CD4-positive, alpha-beta T cell (primary cell): ENCODE measurements at regions of chr2 and their contacts with region 1.

Region 1: DNA sequence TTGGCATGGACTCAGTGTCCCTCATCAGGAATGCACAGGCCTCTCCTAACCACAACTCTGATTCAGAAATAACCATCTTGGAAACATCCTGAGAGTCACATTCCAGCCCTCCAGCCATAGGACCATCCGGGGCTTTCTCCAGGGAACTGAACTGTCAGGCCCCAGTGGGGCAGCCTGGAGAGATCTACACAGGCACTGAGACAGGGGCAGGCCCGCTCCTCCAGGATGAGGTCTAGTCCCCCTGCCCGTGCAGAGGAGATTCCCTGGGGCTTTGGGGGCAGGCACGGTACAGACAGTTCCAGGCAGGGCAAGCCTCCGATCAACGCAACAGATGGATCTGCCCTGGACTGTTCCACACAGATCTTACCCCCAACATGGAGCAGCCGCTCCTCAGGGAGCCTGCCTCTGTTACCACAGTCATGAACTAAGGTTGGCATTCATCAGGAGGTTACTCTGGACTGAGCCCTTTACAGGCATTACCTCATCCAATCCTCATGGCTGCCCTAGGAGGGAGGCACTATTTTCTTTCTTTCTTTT is 12.0 kb downstream of the KCNK3 start:
- DNase-seq: no peak
- ATAC-seq: no peak
- H3K4me3 ChIP-seq: no peak overlapping the region
- H3K4me3 Mint-ChIP-seq: no peak overlapping the region
- H3K27ac ChIP-seq: no peak overlapping the region
- H3K27ac Mint-ChIP-seq: no peak overlapping the region
- H3K4me1 ChIP-seq: no peaks in the 10 kb centered on the region
- H3K4me1 Mint-ChIP-seq: no peaks in the 10 kb centered on the region
- H3K27me3 ChIP-seq: peaks cover 4 to 5% of the 10 kb centered on the region in 2 experiments
- H3K27me3 Mint-ChIP-seq: peaks cover 13% of the 10 kb centered on the region
- CTCF ChIP-seq: no peak

Region 2: DNA sequence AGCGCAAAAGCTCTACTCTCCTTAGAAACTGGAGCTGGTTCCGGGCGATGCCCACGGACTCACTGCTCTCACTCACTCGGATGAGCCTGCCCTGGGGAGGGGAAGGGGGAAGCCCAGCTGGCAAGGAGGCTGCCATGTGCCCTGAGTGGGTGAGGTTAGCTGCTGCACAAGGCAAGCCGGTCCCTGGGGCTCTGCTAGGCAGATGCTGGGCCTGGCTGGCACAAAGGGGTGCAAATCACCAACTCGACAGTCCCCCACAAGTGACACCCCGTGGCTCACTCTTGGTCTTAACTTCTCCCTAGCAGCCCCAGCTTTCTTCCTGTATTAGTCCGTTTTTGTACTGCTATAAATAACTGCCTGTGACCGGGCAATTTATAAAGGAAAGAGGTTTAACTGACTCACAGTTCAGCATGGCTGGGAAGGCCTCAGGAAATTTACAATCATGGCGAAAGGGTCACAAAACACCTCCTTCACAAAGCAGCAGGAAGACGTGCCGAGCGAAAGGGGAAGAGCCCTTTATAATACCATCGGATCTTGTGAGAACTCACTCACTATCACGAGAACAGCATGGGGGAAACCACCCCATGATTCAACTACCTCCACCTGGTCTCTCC is 1817.7 kb before region 1 on chr2:
- CTCF ChIA-PET with region 1: no interaction called
- POLR2A ChIA-PET with region 1: no interaction called
- intact Hi-C with region 1: loop called in 1 of 2 experiments (anchors 5 kb)
- DNase-seq: peak in 2 of 14 experiments; percentile 43 to 66
- ATAC-seq: no peak
- H3K4me3 ChIP-seq: no peak overlapping the region
- H3K4me3 Mint-ChIP-seq: no peak overlapping the region
- H3K27ac ChIP-seq: no peak overlapping the region
- H3K27ac Mint-ChIP-seq: no peak overlapping the region
- H3K4me1 ChIP-seq: no peaks in the 10 kb centered on the region
- H3K4me1 Mint-ChIP-seq: peaks cover 11% of the 10 kb centered on the region
- H3K27me3 ChIP-seq: no peaks in the 10 kb centered on the region
- H3K27me3 Mint-ChIP-seq: no peaks in the 10 kb centered on the region
- CTCF ChIP-seq: no peak